GM18951 (cell line): ENCODE measurements at regions of chr17 and their contacts with region 1.

Region 1: DNA sequence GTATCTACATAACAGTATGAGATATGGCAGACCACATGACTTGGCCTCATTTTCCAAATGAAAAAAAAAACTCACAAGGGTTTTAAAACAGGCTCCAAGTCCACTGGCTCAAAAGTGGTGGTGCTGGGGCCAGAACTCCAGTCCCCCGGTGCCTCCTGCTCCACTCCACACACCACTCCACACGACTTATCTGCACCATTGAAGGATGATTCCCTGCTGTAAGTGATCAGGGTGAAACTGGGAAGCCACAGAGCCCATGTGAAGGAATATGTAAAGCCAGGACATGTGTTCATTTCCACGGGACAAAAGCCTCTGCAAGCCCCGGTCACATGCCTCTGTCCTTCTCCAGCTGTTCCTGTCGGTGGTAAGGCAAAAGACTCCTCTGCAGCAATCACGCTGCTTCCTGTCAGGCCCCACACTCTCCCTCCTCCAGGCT is 97.2 kb downstream of the ZNF18 start:
- POLR2A ChIP-seq: no peak

Region 2: GRCh38 chr17:10875979-10876555 is 1024.0 kb before region 1 on chr17:
- in situ Hi-C with region 1: loop called (anchors 25 kb)
- POLR2A ChIP-seq: no peak

Region 3: GRCh38 chr17:11701911-11702310 is 198.1 kb before region 1 on chr17:
- in situ Hi-C with region 1: no loop called
- POLR2A ChIP-seq: no peak